ENCODE measurements at regions of chr1 and their contacts with region 1.

Region 1: GRCh38 chr1:201559679-201560162 is 20.8 kb downstream of the NAV1 start:
- DNase-seq: peak; percentile 68 to 92 (median 80)
- ATAC-seq: peak; percentile 94 to 99 (median 98)
- H3K4me3 ChIP-seq: no peak overlapping the region
- H3K27ac ChIP-seq: no peak overlapping the region
- H3K4me1 ChIP-seq: no peaks in the 10 kb centered on the region
- H3K27me3 ChIP-seq: no peaks in the 10 kb centered on the region
- CTCF ChIP-seq: peak; percentile 81 to 90 (median 88)

Region 2: GRCh38 chr1:201696217-201696761 is 136.6 kb after region 1 on chr1:
- intact Hi-C with region 1: loop called in 1 of 3 experiments (anchors 10 kb)
- DNase-seq: no peak
- ATAC-seq: peak in 3 of 4 donors; percentile 30 to 69 (median 55)
- H3K4me3 ChIP-seq: no peak overlapping the region
- H3K27ac ChIP-seq: no peak overlapping the region
- H3K4me1 ChIP-seq: no peaks in the 10 kb centered on the region
- H3K27me3 ChIP-seq: no peaks in the 10 kb centered on the region
- CTCF ChIP-seq: no peak

Region 3: DNA sequence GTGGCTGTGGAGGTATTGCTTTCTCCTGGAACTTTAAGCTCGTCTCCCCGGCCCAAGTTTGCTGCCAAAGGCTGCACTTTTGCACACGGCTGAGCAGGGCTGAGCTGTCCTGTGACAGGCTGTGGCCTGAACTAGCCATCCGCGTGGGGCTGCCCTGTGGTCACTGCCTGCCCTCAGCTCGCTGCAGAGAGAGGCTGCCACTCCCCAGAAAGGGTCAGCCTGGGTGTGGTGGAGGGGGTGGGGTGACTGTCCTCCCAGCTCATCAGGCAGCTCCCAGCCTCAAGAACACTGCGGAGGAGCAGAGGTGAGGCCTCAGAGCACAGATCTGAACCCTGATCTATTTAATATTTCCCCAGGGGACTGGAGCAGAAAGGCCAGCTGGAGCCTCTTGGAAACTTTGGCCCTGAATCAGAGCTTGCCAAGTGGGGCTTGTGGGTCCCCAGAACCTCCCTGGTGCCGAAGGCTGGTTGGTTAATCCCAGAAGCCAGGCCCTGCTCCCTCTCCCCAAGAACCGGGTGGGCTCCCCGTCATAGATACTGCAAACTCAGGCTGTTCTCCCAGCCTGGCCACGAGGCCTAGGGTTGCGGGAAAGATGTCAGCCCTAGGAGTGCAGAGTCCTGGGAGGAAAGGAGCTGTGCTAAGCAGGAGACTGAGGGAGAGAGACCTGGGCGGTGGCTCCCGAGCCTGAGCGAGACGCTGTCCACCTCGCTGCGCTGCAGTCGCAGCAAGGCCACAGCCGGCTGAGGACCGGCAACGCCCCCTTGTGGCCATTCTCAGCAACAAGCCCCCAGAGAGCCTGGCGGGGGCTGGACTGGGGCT is 144.1 kb after region 1 on chr1:
- intact Hi-C with region 1: loop called (anchors 2 to 10 kb)
- DNase-seq: peak; percentile 73 to 95 (median 88)
- ATAC-seq: peak; percentile 91 to 95 (median 92)
- H3K4me3 ChIP-seq: no peak overlapping the region
- H3K27ac ChIP-seq: peak overlapping the region in 3 of 4 donors; percentile 1 to 23 (median 1)
- H3K4me1 ChIP-seq: peaks cover 0 to 3% (median 0%) of the 10 kb centered on the region in 3 donors
- H3K27me3 ChIP-seq: no peaks in the 10 kb centered on the region
- CTCF ChIP-seq: peak; percentile 92 to 98 (median 95)

Region 4: DNA sequence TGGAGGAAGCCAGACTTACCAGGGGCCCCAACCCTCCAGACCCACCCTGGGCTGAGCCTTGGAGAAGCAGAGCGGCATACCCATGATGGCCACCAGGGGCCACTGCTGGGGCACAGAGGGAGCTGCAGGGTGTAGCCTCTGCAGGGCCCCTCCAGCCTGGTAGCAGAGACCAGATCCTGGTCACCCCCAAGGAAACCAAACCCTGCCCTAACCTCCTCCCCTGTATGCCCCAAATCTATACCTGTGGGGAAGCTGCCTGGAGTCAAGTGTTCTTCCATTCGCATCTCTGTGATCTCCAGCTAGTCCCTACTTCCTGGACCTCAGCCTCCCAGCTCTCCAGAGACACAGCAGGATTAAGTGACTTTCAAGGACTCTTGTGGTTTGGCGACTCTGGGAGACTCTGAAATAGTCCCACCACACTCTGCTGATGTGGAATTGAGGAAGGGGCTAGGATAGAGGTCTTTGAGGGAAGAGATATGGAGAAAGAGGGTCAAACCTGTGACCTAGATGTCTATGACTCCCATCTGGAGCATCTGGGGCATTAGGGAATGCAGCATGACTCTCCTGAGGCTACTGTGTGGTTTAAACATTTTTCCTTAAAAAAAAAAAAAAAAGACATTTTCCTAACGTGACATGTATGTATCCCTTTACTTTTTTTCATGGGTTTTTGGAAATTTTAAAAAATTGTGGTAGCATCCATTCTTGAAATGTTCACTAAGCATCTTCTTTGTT is 150.0 kb after region 1 on chr1:
- intact Hi-C with region 1: loop called in 1 of 3 experiments (anchors 5 kb)
- DNase-seq: peak; percentile 45 to 88 (median 69)
- ATAC-seq: peak; percentile 33 to 76 (median 68)
- H3K4me3 ChIP-seq: no peak overlapping the region
- H3K27ac ChIP-seq: no peak overlapping the region
- H3K4me1 ChIP-seq: peaks cover 0 to 25% (median 20%) of the 10 kb centered on the region in 3 donors
- H3K27me3 ChIP-seq: no peaks in the 10 kb centered on the region
- CTCF ChIP-seq: peak; percentile 85 to 91 (median 86)

Region 5: DNA sequence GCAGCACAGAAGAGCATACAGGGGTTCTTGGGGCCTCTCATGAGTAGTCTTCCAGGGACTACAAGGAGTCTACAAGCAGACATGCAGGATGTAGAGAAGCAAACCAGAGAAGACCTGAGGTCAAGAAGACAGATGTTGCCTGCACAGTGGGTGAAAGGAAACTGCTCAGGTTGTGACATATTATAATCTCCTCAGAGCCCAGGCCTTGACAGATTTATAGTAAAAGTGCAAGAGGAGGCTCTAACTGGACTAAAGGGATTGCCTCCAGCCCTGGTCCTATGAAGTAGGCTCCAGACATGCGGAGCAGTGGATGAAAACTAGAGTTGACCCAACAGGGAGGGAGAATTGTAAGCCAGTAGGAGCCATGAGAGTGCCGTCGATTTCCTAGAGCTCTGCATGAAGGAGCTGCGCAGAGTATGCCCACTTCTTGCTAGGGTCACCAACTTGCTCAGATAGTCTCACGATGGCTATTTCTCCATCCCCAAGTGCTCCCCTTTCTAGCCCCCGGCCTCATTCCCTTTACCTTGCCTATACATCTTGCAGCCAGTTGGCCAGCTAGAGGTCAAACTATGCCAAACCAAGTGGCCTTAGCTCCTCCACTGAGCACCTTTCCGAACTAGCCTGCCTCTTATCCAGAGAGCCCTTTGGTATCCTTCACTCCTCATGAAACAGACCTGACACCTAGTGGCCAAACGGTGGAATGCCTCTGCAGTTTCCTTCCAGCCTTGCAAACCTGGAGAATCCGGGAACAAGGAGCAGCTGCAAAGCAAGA is 233.0 kb after region 1 on chr1:
- intact Hi-C with region 1: loop called in 2 of 3 experiments (anchors 5 kb)
- DNase-seq: peak; percentile 68 to 88 (median 70)
- ATAC-seq: peak; percentile 93 to 98 (median 96)
- H3K4me3 ChIP-seq: no peak overlapping the region
- H3K27ac ChIP-seq: no peak overlapping the region
- H3K4me1 ChIP-seq: no peaks in the 10 kb centered on the region
- H3K27me3 ChIP-seq: no peaks in the 10 kb centered on the region
- CTCF ChIP-seq: peak; percentile 86 to 92 (median 90)

Region 6: GRCh38 chr1:202135221-202135721 is 575.5 kb after region 1 on chr1:
- intact Hi-C with region 1: no loop called
- DNase-seq: peak in 3 of 6 donors; percentile 61 to 81 (median 70)
- ATAC-seq: peak; percentile 68 to 92 (median 84)
- H3K4me3 ChIP-seq: no peak overlapping the region
- H3K27ac ChIP-seq: peak overlapping the region in 3 of 4 donors; percentile 18 to 44 (median 28)
- H3K4me1 ChIP-seq: no peaks in the 10 kb centered on the region
- H3K27me3 ChIP-seq: no peaks in the 10 kb centered on the region
- CTCF ChIP-seq: peak; percentile 49 to 88 (median 84)

Measured in pancreas (tissue), 10 donors.